ENCODE measurements at regions of chr7 and their contacts with region 1.

Region 1: GRCh38 chr7:100545360-100546128 is 6.5 kb downstream of the AGFG2 start:
- DNase-seq: peak; percentile 59 to 91
- H3K4me3 ChIP-seq: peak overlapping the region; percentile 11 to 14
- H3K27ac ChIP-seq: peak overlapping the region; percentile 91 to 94
- H3K4me1 ChIP-seq: peaks cover 28 to 46% of the 10 kb centered on the region in 2 donors
- H3K27me3 ChIP-seq: no peaks in the 10 kb centered on the region
- CTCF ChIP-seq: peak in 1 of 3 experiments; percentile 3

Region 2: GRCh38 chr7:100489824-100490223 is 55.7 kb before region 1 on chr7:
- intact Hi-C with region 1: no loop called
- DNase-seq: no peak
- H3K4me3 ChIP-seq: no peak overlapping the region
- H3K27ac ChIP-seq: no peak overlapping the region
- H3K4me1 ChIP-seq: no peaks in the 10 kb centered on the region
- H3K27me3 ChIP-seq: no peaks in the 10 kb centered on the region
- CTCF ChIP-seq: no peak

Region 3: GRCh38 chr7:100586266-100587025 is 40.9 kb after region 1 on chr7 and contains the start of gene FBXO24:
- intact Hi-C with region 1: loop called (anchors 2 kb)
- DNase-seq: peak; percentile 99 to 100
- H3K4me3 ChIP-seq: peak within 1 kb of the TSS; percentile 82 to 84
- H3K27ac ChIP-seq: peak within 1 kb of the TSS; percentile 84 to 87
- H3K4me1 ChIP-seq: peaks cover 0 to 25% of the 10 kb centered on the region in 2 donors
- H3K27me3 ChIP-seq: no peaks in the 10 kb centered on the region
- CTCF ChIP-seq: no peak
- total RNA-seq, gene FBXO24: not detected

Region 4: GRCh38 chr7:100949227-100949932 is 403.8 kb after region 1 on chr7 and contains the start of gene MUC3A:
- intact Hi-C with region 1: no loop called
- DNase-seq: no peak
- H3K4me3 ChIP-seq: no peak within 1 kb of the TSS
- H3K27ac ChIP-seq: no peak within 1 kb of the TSS
- H3K4me1 ChIP-seq: no peaks in the 10 kb centered on the region
- H3K27me3 ChIP-seq: no peaks in the 10 kb centered on the region
- CTCF ChIP-seq: no peak
- total RNA-seq, gene MUC3A: not detected

Measured in ascending aorta (tissue), 2 donors.